Common myeloid progenitor, CD34-positive (primary cell): ENCODE measurements at regions of chr5 and their contacts with region 1.

Region 1: DNA sequence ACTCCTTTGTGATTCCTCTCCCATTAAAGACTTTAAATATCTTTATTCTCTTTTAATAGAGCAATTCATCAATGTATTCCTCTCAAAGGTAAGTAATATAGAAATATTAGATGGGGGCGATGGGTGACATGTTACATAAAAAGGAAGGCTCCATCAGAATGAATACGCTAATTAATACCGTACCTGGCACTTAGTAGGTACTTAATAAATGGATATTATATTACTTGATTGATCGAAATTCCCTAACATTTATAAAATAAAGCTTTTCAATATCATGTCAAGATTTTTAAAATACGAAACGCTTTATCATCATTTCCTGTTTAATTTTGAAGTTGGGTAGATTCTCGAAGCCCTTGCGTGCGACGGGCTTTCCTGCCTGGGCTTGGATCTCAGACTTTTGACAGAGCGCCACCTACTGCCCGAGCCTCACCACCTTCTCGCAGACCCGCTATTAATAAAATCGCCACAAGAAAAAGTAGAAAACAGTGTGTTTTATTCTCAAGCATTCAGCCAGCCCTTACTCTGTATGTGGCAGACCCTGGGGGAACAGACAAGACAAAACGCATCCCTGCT is 99.4 kb downstream of the C5orf15 start:
- DNase-seq: peak; percentile 88 to 93 (median 91)
- H3K4me3 ChIP-seq: no peak overlapping the region
- H3K27ac ChIP-seq: no peak overlapping the region
- H3K4me1 ChIP-seq: peaks cover 0 to 2% (median 0%) of the 10 kb centered on the region in 4 experiments
- H3K27me3 ChIP-seq: no peaks in the 10 kb centered on the region

Region 2: GRCh38 chr5:133715622-133716021 is 153.4 kb before region 1 on chr5:
- CTCF ChIA-PET with region 1: no interaction called
- POLR2A ChIA-PET with region 1: no interaction called
- DNase-seq: no peak
- H3K4me3 ChIP-seq: no peak overlapping the region
- H3K27ac ChIP-seq: no peak overlapping the region
- H3K4me1 ChIP-seq: no peaks in the 10 kb centered on the region
- H3K27me3 ChIP-seq: peaks cover 0 to 3% (median 2%) of the 10 kb centered on the region in 5 experiments

Region 3: GRCh38 chr5:133881576-133882388 is 12.8 kb after region 1 on chr5:
- CTCF ChIA-PET with region 1: interaction called, 31 read pairs
- POLR2A ChIA-PET with region 1: no interaction called
- DNase-seq: no peak
- H3K4me3 ChIP-seq: no peak overlapping the region
- H3K27ac ChIP-seq: no peak overlapping the region
- H3K4me1 ChIP-seq: no peaks in the 10 kb centered on the region
- H3K27me3 ChIP-seq: peaks cover 0 to 6% (median 0%) of the 10 kb centered on the region in 5 experiments

Region 4: GRCh38 chr5:133985540-133986180 is 116.6 kb after region 1 on chr5:
- CTCF ChIA-PET with region 1: no interaction called
- POLR2A ChIA-PET with region 1: no interaction called
- DNase-seq: no peak
- H3K4me3 ChIP-seq: no peak overlapping the region
- H3K27ac ChIP-seq: no peak overlapping the region
- H3K4me1 ChIP-seq: no peaks in the 10 kb centered on the region
- H3K27me3 ChIP-seq: no peaks in the 10 kb centered on the region